AG04450 (cell line): ENCODE measurements at regions of chr6 and their contacts with region 1.

Region 1: GRCh38 chr6:89122625-89123024 is 4.8 kb upstream of the SRSF12 start:
- DNase-seq: no peak
- H3K4me3 ChIP-seq: no peak overlapping the region
- H3K27ac ChIP-seq: no peak overlapping the region
- H3K27me3 ChIP-seq: peaks cover 10% of the 10 kb centered on the region
- CTCF ChIP-seq: peak; percentile 70

Region 2: DNA sequence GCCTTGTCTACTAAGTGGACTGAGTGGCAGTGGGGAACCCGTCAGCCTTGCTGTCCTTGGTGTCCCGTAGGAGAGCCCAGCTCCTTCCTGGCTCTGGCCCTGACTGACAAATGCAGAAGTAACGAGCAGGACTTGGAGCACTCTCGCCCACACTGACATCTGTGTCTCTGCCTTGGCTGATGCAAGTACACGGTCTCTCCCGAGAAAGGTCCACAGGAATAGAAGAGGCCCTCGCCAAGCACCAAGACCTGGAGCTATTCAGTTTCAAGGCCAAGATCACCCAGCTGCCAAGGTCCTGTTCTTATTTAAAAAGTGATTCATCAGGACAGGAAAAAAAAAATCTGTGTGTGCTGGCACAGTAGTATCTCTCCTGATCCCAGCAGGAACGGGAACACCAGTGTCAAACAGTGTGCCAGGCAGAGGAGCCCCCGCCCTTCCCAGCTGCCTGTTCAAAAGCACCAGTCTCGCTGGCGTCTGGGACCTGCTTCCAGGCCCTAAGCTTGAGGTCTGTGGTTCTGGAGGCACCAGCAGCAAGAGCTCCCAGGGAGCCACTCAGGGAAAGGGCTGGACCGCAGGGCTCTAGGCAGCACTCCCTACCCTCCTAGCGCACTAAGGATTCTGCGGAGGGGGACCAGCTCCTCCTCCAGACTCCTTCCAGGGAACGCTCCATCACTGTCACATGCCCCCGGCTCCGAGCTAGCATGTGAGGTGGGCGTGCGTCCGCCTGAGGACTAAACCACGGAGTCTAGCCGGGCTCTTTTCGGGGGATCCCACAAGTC is 536.1 kb before region 1 on chr6:
- CTCF ChIA-PET with region 1: no interaction called
- POLR2A ChIA-PET with region 1: no interaction called
- DNase-seq: no peak
- H3K4me3 ChIP-seq: no peak overlapping the region
- H3K27ac ChIP-seq: no peak overlapping the region
- H3K27me3 ChIP-seq: peaks cover 2% of the 10 kb centered on the region
- CTCF ChIP-seq: no peak

Region 3: GRCh38 chr6:88840796-88841539 is 281.7 kb before region 1 on chr6:
- CTCF ChIA-PET with region 1: no interaction called
- POLR2A ChIA-PET with region 1: no interaction called
- DNase-seq: no peak
- H3K4me3 ChIP-seq: no peak overlapping the region
- H3K27ac ChIP-seq: no peak overlapping the region
- H3K27me3 ChIP-seq: no peaks in the 10 kb centered on the region
- CTCF ChIP-seq: no peak

Region 4: DNA sequence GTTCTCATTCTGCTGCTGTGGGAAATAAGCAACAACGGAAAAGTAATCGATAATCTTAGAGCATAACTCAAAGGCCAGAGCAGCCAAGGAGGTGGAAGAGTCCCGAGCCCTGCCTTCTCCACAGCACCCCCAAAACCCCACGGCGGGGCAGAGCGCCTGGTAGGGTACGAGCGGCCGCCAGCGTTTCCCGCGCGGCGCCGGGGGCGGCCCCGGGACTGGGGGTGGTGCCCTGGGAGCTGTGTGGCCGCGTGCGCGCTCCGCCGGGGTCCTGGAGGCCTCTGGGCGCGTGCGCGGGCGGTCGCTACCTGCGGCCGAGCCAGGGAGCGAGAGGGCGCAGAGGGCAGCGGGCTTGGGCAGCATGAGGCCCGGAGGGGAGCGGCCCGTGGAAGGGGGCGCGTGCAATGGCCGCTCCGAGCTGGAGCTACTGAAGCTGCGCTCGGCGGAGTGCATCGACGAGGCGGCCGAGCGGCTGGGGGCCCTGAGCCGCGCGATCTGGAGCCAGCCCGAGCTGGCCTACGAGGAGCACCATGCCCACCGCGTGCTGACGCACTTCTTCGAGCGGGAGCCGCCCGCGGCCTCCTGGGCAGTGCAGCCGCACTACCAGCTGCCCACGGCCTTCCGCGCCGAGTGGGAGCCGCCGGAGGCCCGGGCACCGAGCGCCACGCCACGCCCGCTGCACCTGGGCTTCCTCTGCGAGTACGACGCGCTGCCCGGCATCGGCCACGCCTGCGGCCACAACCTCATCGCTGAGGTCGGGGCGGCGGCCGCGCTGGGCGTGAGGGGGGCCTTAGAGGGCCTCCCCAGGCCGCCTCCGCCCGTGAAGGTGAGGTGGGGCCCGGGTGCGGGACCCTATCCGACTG is 23.4 kb after region 1 on chr6 and contains the start of gene PM20D2:
- CTCF ChIA-PET with region 1: interaction called, 12 read pairs
- POLR2A ChIA-PET with region 1: no interaction called
- DNase-seq: no peak
- H3K4me3 ChIP-seq: peak within 1 kb of the TSS; percentile 66
- H3K27ac ChIP-seq: no peak within 1 kb of the TSS
- H3K27me3 ChIP-seq: peaks cover 4% of the 10 kb centered on the region
- CTCF ChIP-seq: no peak
- polyA plus RNA-seq, gene PM20D2: 4.6 and 6.5 TPM in 2 replicates

Region 5: DNA sequence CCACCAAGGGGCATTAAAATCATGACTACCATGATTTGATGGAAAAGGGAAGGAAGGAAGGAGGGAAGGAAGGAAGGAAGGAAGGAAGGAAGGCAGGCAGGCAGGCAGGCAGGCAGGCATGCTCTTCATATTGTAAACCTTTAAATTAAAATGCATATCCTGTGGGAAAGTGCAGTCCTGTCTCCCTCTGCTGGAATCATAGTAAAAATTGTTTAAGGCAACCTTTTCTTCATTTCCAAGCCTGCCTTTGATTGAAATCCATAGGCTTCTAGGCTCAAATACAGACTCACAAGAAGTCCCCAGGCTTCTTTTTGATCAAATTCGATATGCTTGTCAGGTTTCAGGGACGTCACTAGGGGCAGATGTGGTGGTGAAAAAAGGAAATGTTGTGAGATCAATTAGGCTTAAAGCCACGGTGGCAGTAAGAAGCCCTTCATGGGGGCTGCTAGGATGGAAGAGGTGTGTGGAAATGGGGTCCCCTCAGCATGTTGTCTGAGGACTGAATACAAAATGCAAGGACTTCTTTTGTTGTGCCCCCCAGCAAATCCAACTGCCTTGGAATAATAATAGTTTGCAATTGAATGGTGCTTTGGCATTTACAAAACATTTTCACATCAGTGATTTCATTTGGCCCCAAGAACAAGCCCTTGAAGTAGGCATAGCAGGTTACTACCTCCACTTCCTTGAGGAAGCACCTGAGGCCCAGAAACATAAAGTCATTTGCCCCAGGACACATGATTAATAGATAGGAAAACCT is 120.1 kb after region 1 on chr6:
- CTCF ChIA-PET with region 1: interaction called, 40 read pairs
- POLR2A ChIA-PET with region 1: no interaction called
- DNase-seq: peak; percentile 34
- H3K4me3 ChIP-seq: no peak overlapping the region
- H3K27ac ChIP-seq: no peak overlapping the region
- H3K27me3 ChIP-seq: peaks cover 9% of the 10 kb centered on the region
- CTCF ChIP-seq: peak; percentile 70